ENCODE measurements at regions of chr14 and their contacts with region 1.

Region 1: DNA sequence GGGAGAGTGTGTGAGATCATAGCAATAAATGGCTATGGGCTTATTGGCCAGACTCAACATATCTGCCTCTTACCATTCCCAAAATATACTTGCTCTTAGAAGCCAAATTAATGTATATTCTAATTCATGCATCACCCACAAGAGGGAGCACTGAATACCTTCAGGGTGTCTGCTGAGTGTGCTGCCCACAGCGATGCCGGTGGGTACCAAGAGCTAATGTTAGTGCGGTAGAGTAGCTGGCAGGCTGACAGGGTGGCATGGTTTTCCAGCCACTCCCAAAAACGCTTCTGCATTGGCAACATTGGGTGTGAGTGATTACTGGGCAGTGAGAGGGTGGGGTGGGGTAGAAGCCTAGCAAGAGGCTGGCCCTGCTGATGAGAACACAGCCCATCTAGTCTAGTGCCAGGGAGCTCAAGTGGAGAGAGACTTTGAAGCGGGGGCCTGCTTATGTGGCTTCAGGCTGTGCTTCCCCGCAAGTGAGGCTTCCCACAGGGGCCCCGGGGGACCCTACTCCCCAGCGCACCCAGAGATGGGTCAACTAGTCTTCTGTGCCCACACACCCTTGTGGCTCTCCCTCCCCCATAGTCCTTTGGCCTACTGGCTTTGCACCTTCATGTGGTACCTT is 9.2 kb upstream of the PLEKHD1 start:
- DNase-seq: peak in 1 of 2 experiments; percentile 41
- H3K4me3 ChIP-seq: no peak overlapping the region
- H3K4me3 Mint-ChIP-seq: no peak overlapping the region
- H3K27ac Mint-ChIP-seq: no peak overlapping the region
- H3K4me1 ChIP-seq: no peaks in the 10 kb centered on the region
- H3K4me1 Mint-ChIP-seq: no peaks in the 10 kb centered on the region
- H3K27me3 ChIP-seq: no peaks in the 10 kb centered on the region
- H3K27me3 Mint-ChIP-seq: no peaks in the 10 kb centered on the region
- CTCF ChIP-seq: peak; percentile 42 to 57

Region 2: GRCh38 chr14:69574263-69574953 is 99.1 kb after region 1 on chr14 and contains the start of gene CCDC177:
- CTCF ChIA-PET with region 1: interaction called, 6 read pairs
- POLR2A ChIA-PET with region 1: no interaction called
- intact Hi-C with region 1: loop called (anchors 2 kb)
- DNase-seq: peak; percentile 59 to 81
- H3K4me3 ChIP-seq: peak within 1 kb of the TSS; percentile 26
- H3K4me3 Mint-ChIP-seq: peak within 1 kb of the TSS; percentile 87
- H3K27ac Mint-ChIP-seq: peak within 1 kb of the TSS; percentile 39
- H3K4me1 ChIP-seq: peaks cover 40% of the 10 kb centered on the region
- H3K4me1 Mint-ChIP-seq: peaks cover 31% of the 10 kb centered on the region
- H3K27me3 ChIP-seq: no peaks in the 10 kb centered on the region
- H3K27me3 Mint-ChIP-seq: peaks cover 3% of the 10 kb centered on the region
- CTCF ChIP-seq: peak; percentile 89 to 92
- total RNA-seq, gene CCDC177: 0.56 and 0.82 TPM in 2 replicates